Transverse colon (tissue), 4 donors: ENCODE measurements at regions of chr22 and their contacts with region 1.

Region 1: GRCh38 chr22:43945632-43946383 is 9.4 kb upstream of the SAMM50 start:
- DNase-seq: peak; percentile 70
- H3K4me3 ChIP-seq: no peak overlapping the region
- H3K27ac ChIP-seq: no peak overlapping the region
- H3K4me1 ChIP-seq: no peaks in the 10 kb centered on the region
- H3K27me3 ChIP-seq: no peaks in the 10 kb centered on the region
- CTCF ChIP-seq: peak; percentile 30 to 57 (median 56)
- EP300 ChIP-seq: no peak
- POLR2A ChIP-seq: no peak

Region 2: DNA sequence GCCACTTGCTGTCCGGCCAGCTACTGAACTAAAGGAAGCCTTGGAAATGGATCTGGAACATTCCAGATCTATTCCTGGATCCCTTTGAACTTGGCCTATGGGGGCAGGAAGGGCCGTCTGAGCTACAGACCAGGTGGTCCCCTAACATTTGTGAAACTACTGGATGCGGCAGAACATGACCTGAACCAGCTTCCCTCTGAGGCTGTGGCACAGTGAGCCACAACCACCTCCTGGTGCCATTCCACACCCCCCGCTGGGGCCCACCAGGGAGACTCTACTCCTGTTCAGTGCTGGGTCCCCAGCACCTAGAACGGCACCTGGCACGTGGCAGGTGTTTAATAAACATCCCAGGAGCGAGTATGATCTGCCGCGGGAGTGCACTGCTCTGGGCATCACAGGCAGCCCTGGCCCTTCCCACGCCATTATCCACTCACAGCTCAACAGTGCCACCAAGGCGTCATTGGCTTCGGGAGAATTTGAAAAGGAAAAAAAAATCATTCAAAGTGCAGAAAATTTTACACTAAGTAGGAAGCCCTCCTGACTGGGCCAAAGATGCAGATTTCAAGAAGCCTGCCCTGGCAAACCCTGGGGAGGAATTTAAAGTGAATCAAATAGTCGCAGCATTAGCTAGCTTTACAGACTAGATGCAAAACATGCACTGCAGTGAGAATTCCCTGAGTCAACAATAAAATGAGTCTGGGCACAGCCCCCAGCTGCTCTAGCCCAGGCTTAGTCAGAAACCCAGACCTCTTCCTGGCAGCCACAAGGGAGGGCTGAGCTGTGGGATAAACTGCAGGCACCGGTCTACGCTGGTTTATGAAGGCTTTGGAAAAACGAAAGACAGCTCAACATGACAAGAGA is 119.4 kb before region 1 on chr22:
- in situ Hi-C with region 1: loop called in 1 of 4 experiments (anchors 25 kb)
- intact Hi-C with region 1: no loop called
- DNase-seq: no peak
- H3K4me3 ChIP-seq: no peak overlapping the region
- H3K27ac ChIP-seq: peak overlapping the region in 3 of 4 donors; percentile 24 to 38 (median 32)
- H3K4me1 ChIP-seq: peaks cover 0 to 9% (median 2%) of the 10 kb centered on the region in 4 donors
- H3K27me3 ChIP-seq: peaks cover 11% of the 10 kb centered on the region
- CTCF ChIP-seq: peak in 3 of 5 experiments; percentile 14 to 26 (median 22)
- EP300 ChIP-seq: no peak
- POLR2A ChIP-seq: no peak